CD4-positive, alpha-beta memory T cell (primary cell): ENCODE measurements at regions of chr6 and their contacts with region 1.

Region 1: DNA sequence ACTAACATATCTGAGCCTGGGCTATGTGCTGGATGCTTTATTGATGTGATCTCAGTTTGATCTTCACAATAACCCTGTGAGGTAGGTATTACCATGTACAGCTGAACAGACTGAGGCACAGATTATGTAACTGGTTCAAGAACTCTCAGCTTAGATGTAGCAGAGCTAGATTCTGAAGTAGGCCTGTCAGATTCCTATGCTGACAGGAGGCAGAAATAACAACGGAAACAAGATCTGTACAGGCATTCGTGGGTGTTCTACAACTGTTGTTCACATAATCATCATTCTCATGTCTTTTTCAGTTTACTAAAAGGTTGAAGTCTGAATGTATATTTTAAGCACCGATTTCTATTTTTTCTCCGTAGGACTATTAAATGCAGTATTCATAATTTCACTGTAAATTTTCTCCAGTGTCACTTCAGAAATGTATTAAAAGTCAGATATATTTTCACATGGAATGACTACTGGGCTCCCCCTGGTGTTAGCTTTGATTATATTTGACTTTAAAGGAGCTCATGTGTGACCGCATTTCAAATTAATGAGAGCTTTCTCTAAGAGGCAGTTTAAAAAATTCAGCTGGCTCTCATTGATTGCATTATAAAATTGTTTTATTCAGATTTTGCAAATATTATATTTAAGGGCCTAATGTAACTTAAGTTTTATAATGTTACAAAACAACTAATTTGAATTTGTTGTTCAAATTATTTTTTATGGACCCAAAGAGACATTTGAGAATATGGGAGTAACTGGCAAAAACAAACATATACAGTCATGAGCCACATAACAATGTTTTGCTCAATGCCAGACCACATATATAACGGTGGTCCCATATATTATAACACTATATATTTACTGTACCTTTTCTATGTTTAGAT is 36.4 kb upstream of the SLC17A4 start:
- DNase-seq: peak in 4 of 5 donors; percentile 4 to 14 (median 9)
- H3K4me3 ChIP-seq: no peak overlapping the region
- H3K4me3 Mint-ChIP-seq: no peak overlapping the region
- H3K27ac ChIP-seq: no peak overlapping the region
- H3K27ac Mint-ChIP-seq: no peak overlapping the region
- H3K4me1 ChIP-seq: no peaks in the 10 kb centered on the region
- H3K4me1 Mint-ChIP-seq: peaks cover 0 to 3% (median 0%) of the 10 kb centered on the region in 4 donors
- H3K27me3 ChIP-seq: no peaks in the 10 kb centered on the region
- H3K27me3 Mint-ChIP-seq: peaks cover 10 to 11% of the 10 kb centered on the region in 2 donors

Region 2: GRCh38 chr6:25248100-25248499 is 470.0 kb before region 1 on chr6:
- CTCF ChIA-PET with region 1: no interaction called
- POLR2A ChIA-PET with region 1: no interaction called
- intact Hi-C with region 1: no loop called
- DNase-seq: no peak
- H3K4me3 ChIP-seq: no peak overlapping the region
- H3K4me3 Mint-ChIP-seq: no peak overlapping the region
- H3K27ac ChIP-seq: no peak overlapping the region
- H3K27ac Mint-ChIP-seq: no peak overlapping the region
- H3K4me1 ChIP-seq: no peaks in the 10 kb centered on the region
- H3K4me1 Mint-ChIP-seq: no peaks in the 10 kb centered on the region
- H3K27me3 ChIP-seq: no peaks in the 10 kb centered on the region
- H3K27me3 Mint-ChIP-seq: peaks cover 16% of the 10 kb centered on the region in 2 donors

Region 3: DNA sequence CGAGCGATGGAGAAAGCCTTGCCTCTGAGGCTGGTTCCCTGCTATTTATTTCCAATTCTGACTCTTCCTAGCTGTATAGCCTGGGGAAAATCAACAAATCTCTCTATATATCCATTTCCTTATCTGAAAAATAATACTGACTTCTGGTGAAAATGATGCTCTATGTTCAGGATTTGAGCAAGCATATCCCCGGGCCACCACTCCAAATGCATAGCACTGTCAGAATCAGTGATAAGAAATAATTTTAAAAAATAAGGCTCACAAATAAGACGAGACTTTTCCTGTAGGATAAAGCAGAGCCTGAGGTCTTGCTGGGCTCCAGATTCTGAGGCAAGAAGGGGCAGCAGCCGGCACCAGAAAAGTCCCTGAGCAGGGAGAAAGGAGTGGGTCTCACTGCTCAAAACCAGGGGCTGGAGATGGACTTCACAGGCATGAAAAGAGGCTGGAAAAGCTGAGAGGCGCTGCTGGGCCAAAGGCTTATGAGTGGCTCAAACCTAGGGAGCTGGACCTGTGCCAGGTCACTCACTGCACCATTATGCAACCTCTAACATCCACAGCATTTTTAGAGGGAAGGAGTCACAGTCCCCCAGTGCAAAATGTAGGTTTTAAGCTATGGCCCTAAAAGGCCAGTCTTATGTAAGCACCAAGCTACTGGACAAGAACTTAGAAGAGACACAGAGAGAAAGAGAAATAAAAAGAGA is 11.6 kb before region 1 on chr6:
- CTCF ChIA-PET with region 1: interaction called, 33 read pairs
- POLR2A ChIA-PET with region 1: interaction called, 3 read pairs
- intact Hi-C with region 1: no loop called
- DNase-seq: no peak
- H3K4me3 ChIP-seq: no peak overlapping the region
- H3K4me3 Mint-ChIP-seq: no peak overlapping the region
- H3K27ac ChIP-seq: no peak overlapping the region
- H3K27ac Mint-ChIP-seq: no peak overlapping the region
- H3K4me1 ChIP-seq: no peaks in the 10 kb centered on the region
- H3K4me1 Mint-ChIP-seq: no peaks in the 10 kb centered on the region
- H3K27me3 ChIP-seq: peaks cover 3% of the 10 kb centered on the region
- H3K27me3 Mint-ChIP-seq: peaks cover 4 to 18% of the 10 kb centered on the region in 2 donors

Region 4: GRCh38 chr6:25756382-25757363 is 38.6 kb after region 1 on chr6:
- CTCF ChIA-PET with region 1: interaction called, 10 read pairs
- POLR2A ChIA-PET with region 1: no interaction called
- intact Hi-C with region 1: no loop called
- DNase-seq: no peak
- H3K4me3 ChIP-seq: no peak overlapping the region
- H3K4me3 Mint-ChIP-seq: no peak overlapping the region
- H3K27ac ChIP-seq: no peak overlapping the region
- H3K27ac Mint-ChIP-seq: no peak overlapping the region
- H3K4me1 ChIP-seq: no peaks in the 10 kb centered on the region
- H3K4me1 Mint-ChIP-seq: no peaks in the 10 kb centered on the region
- H3K27me3 ChIP-seq: no peaks in the 10 kb centered on the region
- H3K27me3 Mint-ChIP-seq: peaks cover 0 to 10% of the 10 kb centered on the region in 2 donors

Region 5: DNA sequence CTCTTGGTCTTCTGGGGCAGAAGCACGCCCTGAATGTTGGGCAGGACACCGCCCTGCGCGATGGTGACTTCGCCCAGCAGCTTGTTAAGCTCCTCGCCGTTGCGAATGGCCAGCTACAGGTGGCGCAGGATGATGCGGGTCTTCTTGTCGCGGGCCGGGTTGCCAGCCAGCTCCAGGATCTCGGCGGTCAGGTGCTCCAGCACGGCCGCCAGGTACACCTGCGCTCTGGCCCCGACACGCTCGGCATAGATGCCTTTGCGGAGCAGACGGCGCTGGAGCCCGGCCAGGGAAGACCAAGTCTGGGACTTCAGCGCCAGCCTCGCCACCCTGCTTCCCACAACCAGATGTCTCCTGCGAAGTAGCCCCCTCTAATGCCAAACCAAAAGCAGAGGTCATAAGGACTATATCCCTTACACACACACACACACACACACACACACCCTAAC is 164.0 kb after region 1 on chr6:
- CTCF ChIA-PET with region 1: interaction called, 11 read pairs
- POLR2A ChIA-PET with region 1: interaction called, 4 read pairs
- intact Hi-C with region 1: no loop called
- DNase-seq: peak in 3 of 5 donors; percentile 45 to 73 (median 63)
- H3K4me3 ChIP-seq: peak overlapping the region in 1 of 2 donors; percentile 44
- H3K4me3 Mint-ChIP-seq: peak overlapping the region in 5 of 8 donors; percentile 86 to 94 (median 90)
- H3K27ac ChIP-seq: peak overlapping the region; percentile 31
- H3K27ac Mint-ChIP-seq: peak overlapping the region in 5 of 7 donors; percentile 63 to 97 (median 91)
- H3K4me1 ChIP-seq: no peaks in the 10 kb centered on the region
- H3K4me1 Mint-ChIP-seq: peaks cover under 1 to 8% (median 4%) of the 10 kb centered on the region in 4 donors
- H3K27me3 ChIP-seq: no peaks in the 10 kb centered on the region
- H3K27me3 Mint-ChIP-seq: peaks cover 0 to 2% of the 10 kb centered on the region in 2 donors

Region 6: GRCh38 chr6:25889877-25890853 is 172.1 kb after region 1 on chr6:
- CTCF ChIA-PET with region 1: interaction called, 8 read pairs
- POLR2A ChIA-PET with region 1: no interaction called
- intact Hi-C with region 1: loop called (anchors 1 kb)
- DNase-seq: peak in 4 of 5 donors; percentile 34 to 42 (median 40)
- H3K4me3 ChIP-seq: no peak overlapping the region
- H3K4me3 Mint-ChIP-seq: no peak overlapping the region
- H3K27ac ChIP-seq: no peak overlapping the region
- H3K27ac Mint-ChIP-seq: peak overlapping the region in 1 of 7 donors; percentile 43
- H3K4me1 ChIP-seq: no peaks in the 10 kb centered on the region
- H3K4me1 Mint-ChIP-seq: no peaks in the 10 kb centered on the region
- H3K27me3 ChIP-seq: no peaks in the 10 kb centered on the region
- H3K27me3 Mint-ChIP-seq: peaks cover 0 to 2% of the 10 kb centered on the region in 2 donors

Region 7: GRCh38 chr6:26003102-26003694 is 285.1 kb after region 1 on chr6:
- CTCF ChIA-PET with region 1: interaction called, 23 read pairs
- POLR2A ChIA-PET with region 1: no interaction called
- intact Hi-C with region 1: loop called (anchors 1 kb)
- DNase-seq: peak; percentile 21 to 48 (median 37)
- H3K4me3 ChIP-seq: no peak overlapping the region
- H3K4me3 Mint-ChIP-seq: no peak overlapping the region
- H3K27ac ChIP-seq: no peak overlapping the region
- H3K27ac Mint-ChIP-seq: peak overlapping the region in 1 of 7 donors; percentile 59
- H3K4me1 ChIP-seq: peaks cover 4% of the 10 kb centered on the region
- H3K4me1 Mint-ChIP-seq: peaks cover 0 to 6% (median 5%) of the 10 kb centered on the region in 4 donors
- H3K27me3 ChIP-seq: no peaks in the 10 kb centered on the region
- H3K27me3 Mint-ChIP-seq: no peaks in the 10 kb centered on the region